IMR-90 (cell line): ENCODE measurements at regions of chr6 and their contacts with region 1.

Region 1: GRCh38 chr6:139364302-139364981 is 10.0 kb downstream of the CITED2 start:
- DNase-seq: peak; percentile 63
- ATAC-seq: peak; percentile 60; the same call in 1 of the 2 replicates
- H3K4me3 ChIP-seq: no peak overlapping the region
- H3K27ac ChIP-seq: no peak overlapping the region
- H3K4me1 ChIP-seq: peaks cover 5% of the 10 kb centered on the region
- H3K27me3 ChIP-seq: no peaks in the 10 kb centered on the region
- CTCF ChIP-seq: peak; percentile 79
- POLR2A ChIP-seq: no peak
- RAD21 ChIP-seq: peak; percentile 92

Region 2: GRCh38 chr6:138588805-138589434 is 775.5 kb before region 1 on chr6:
- CTCF ChIA-PET with region 1: no interaction called
- POLR2A ChIA-PET with region 1: no interaction called
- dilution Hi-C with region 1: no loop called
- in situ Hi-C with region 1: no loop called
- intact Hi-C with region 1: loop called (anchors 10 kb)
- DNase-seq: peak; percentile 83
- ATAC-seq: peak; percentile 67
- H3K4me3 ChIP-seq: no peak overlapping the region
- H3K27ac ChIP-seq: no peak overlapping the region
- H3K4me1 ChIP-seq: peaks cover 2% of the 10 kb centered on the region
- H3K27me3 ChIP-seq: no peaks in the 10 kb centered on the region
- CTCF ChIP-seq: peak; percentile 92
- POLR2A ChIP-seq: 0 out of 2 replicates have a peak, but pooled peaks have one; percentile 35
- RAD21 ChIP-seq: peak; percentile 90

Region 3: DNA sequence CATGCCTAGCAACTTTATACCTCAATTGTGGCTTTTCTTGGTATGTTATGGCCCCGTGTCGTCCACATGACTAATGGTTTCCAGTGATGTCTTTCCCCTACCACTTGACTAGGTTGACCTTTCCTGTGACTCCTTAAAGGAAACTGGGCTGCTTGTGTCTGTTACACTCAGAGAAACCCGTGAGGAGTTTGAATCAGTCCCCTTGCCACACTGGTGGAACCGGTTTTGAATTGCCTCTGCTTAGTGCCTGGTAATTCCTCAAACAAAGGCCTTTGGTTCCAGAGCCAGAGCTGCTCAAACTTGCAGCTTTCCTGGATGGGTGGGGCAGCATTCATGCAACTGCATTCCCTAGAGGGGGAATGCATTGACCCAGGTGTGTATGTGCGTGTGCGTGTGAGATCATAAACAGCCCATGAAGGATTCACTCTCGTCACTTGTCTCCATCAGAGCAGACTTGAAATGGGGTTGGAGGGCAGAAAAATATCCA is 546.6 kb before region 1 on chr6:
- CTCF ChIA-PET with region 1: no interaction called
- POLR2A ChIA-PET with region 1: no interaction called
- dilution Hi-C with region 1: no loop called
- in situ Hi-C with region 1: loop called (anchors 5 kb)
- intact Hi-C with region 1: loop called (anchors 1 kb)
- DNase-seq: peak; percentile 81
- ATAC-seq: peak; percentile 26; the same call in 1 of the 2 replicates
- H3K4me3 ChIP-seq: no peak overlapping the region
- H3K27ac ChIP-seq: no peak overlapping the region
- H3K4me1 ChIP-seq: peaks cover 4% of the 10 kb centered on the region
- H3K27me3 ChIP-seq: no peaks in the 10 kb centered on the region
- CTCF ChIP-seq: no peak
- POLR2A ChIP-seq: no peak
- RAD21 ChIP-seq: no peak

Region 4: GRCh38 chr6:139029470-139030210 is 334.8 kb before region 1 on chr6:
- CTCF ChIA-PET with region 1: no interaction called
- POLR2A ChIA-PET with region 1: no interaction called
- dilution Hi-C with region 1: no loop called
- in situ Hi-C with region 1: no loop called
- intact Hi-C with region 1: loop called (anchors 5 kb)
- DNase-seq: peak; percentile 59
- ATAC-seq: peak; percentile 65
- H3K4me3 ChIP-seq: peak overlapping the region; percentile 98
- H3K27ac ChIP-seq: peak overlapping the region; percentile 89
- H3K4me1 ChIP-seq: no peaks in the 10 kb centered on the region; the same call in 1 of the 2 replicates
- H3K27me3 ChIP-seq: no peaks in the 10 kb centered on the region
- CTCF ChIP-seq: no peak
- POLR2A ChIP-seq: no peak
- RAD21 ChIP-seq: no peak

Region 5: DNA sequence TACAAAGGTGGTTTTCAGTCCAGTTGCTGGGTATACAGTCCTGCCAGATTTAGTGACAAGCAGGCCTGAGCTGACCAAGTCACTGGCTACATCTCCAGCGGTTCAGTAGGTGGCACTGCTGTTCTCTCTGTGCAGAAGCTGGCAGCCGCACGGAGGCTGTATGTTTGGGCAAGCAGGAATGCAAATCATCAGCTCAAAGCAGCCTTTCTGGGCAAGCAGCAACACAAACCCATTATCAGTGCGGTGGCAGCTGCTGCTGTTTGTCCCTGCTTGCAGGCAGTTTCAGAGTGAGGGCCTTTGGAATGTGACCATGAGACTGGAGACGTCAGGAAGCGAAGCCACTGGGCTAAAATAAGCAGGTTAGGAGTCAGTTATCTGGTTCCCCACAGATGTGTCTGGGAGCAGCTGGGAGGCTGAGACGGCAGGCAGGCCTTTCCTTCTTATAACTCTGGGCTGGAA is 145.1 kb before region 1 on chr6:
- CTCF ChIA-PET with region 1: interaction called, 25 read pairs
- POLR2A ChIA-PET with region 1: interaction called, 7 read pairs
- dilution Hi-C with region 1: no loop called
- in situ Hi-C with region 1: no loop called
- intact Hi-C with region 1: loop called (anchors 1 kb)
- DNase-seq: peak; percentile 90
- ATAC-seq: peak; percentile 100
- H3K4me3 ChIP-seq: no peak overlapping the region
- H3K27ac ChIP-seq: peak overlapping the region; percentile 32; the same call in 1 of the 2 replicates
- H3K4me1 ChIP-seq: no peaks in the 10 kb centered on the region
- H3K27me3 ChIP-seq: no peaks in the 10 kb centered on the region
- CTCF ChIP-seq: peak; percentile 90
- POLR2A ChIP-seq: no peak
- RAD21 ChIP-seq: peak; percentile 96

Region 6: DNA sequence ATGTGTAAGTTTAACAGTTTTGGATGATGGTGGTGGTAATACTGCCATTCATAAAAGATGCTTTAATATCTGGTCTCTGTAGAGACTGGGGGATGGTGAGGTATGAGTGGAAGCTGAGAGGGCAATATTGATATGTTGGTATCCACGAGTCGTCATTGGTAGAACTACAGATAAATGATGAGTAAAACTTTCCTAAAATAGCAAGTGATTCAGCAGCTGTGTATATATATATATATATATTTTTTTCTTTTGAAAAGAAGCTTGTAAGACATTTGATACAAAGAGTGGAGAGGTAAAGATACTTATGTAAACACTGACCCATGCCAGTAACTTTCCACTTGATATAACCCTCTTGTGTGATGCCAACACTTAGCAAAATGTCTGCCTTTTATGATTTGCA is 51.7 kb after region 1 on chr6:
- CTCF ChIA-PET with region 1: no interaction called
- POLR2A ChIA-PET with region 1: no interaction called
- dilution Hi-C with region 1: no loop called
- in situ Hi-C with region 1: no loop called
- intact Hi-C with region 1: no loop called
- DNase-seq: peak; percentile 68
- ATAC-seq: peak; percentile 27
- H3K4me3 ChIP-seq: no peak overlapping the region
- H3K27ac ChIP-seq: no peak overlapping the region
- H3K4me1 ChIP-seq: no peaks in the 10 kb centered on the region; the same call in 1 of the 2 replicates
- H3K27me3 ChIP-seq: no peaks in the 10 kb centered on the region
- CTCF ChIP-seq: no peak
- POLR2A ChIP-seq: no peak
- RAD21 ChIP-seq: no peak

Region 7: DNA sequence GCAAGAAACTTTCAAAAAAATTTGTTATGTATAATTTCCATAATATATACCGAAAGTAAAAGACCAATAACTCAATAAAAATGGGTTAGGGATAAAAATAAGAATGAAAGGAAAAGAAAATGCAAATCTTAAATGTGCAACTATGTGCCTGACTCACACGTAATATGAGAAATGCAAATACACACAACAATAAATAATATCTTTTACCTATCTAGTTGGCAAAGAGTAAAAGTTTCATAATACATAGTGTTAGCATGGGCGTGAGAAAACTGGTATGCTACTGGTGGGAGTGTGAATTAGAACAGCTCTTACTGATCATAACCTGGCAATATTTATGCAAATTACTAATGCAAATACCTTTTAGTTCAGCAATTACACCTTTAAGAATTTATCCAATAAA is 448.5 kb after region 1 on chr6:
- CTCF ChIA-PET with region 1: no interaction called
- POLR2A ChIA-PET with region 1: no interaction called
- dilution Hi-C with region 1: no loop called
- in situ Hi-C with region 1: no loop called
- intact Hi-C with region 1: no loop called
- DNase-seq: no peak
- ATAC-seq: no peak
- H3K4me3 ChIP-seq: no peak overlapping the region
- H3K27ac ChIP-seq: no peak overlapping the region
- H3K4me1 ChIP-seq: no peaks in the 10 kb centered on the region
- H3K27me3 ChIP-seq: no peaks in the 10 kb centered on the region
- CTCF ChIP-seq: no peak
- POLR2A ChIP-seq: no peak
- RAD21 ChIP-seq: no peak

Region 8: GRCh38 chr6:140101367-140101766 is 736.9 kb after region 1 on chr6:
- CTCF ChIA-PET with region 1: no interaction called
- POLR2A ChIA-PET with region 1: no interaction called
- dilution Hi-C with region 1: no loop called
- in situ Hi-C with region 1: no loop called
- intact Hi-C with region 1: no loop called
- DNase-seq: peak; percentile 11
- ATAC-seq: no peak
- H3K4me3 ChIP-seq: no peak overlapping the region
- H3K27ac ChIP-seq: no peak overlapping the region
- H3K4me1 ChIP-seq: no peaks in the 10 kb centered on the region
- H3K27me3 ChIP-seq: no peaks in the 10 kb centered on the region
- CTCF ChIP-seq: no peak
- POLR2A ChIP-seq: no peak
- RAD21 ChIP-seq: no peak